Activated CD4-positive, alpha-beta T cell treated with anti-CD3 and anti-CD28 coated beads for 36 hours (primary cell): ENCODE measurements at regions of chr12 and their contacts with region 1.

Region 1: GRCh38 chr12:1594261-1595025 is at the start of gene FBXL14:
- DNase-seq: peak; percentile 93
- ATAC-seq: peak; percentile 57
- H3K4me3 Mint-ChIP-seq: peak within 1 kb of the TSS; percentile 98
- H3K27ac Mint-ChIP-seq: peak within 1 kb of the TSS; percentile 93
- H3K4me1 Mint-ChIP-seq: peaks cover 38% of the 10 kb centered on the region
- H3K27me3 Mint-ChIP-seq: no peaks in the 10 kb centered on the region
- total RNA-seq, gene FBXL14: 17.0 to 17.8 TPM

Region 2: GRCh38 chr12:459430-460258 is 1134.8 kb before region 1 on chr12 and contains the start of gene B4GALNT3:
- CTCF ChIA-PET with region 1: no interaction called
- POLR2A ChIA-PET with region 1: no interaction called
- intact Hi-C with region 1: loop called in 1 of 2 experiments (anchors 5 kb)
- DNase-seq: peak; percentile 63
- ATAC-seq: peak; percentile 60
- H3K4me3 Mint-ChIP-seq: peak within 1 kb of the TSS; percentile 74
- H3K27ac Mint-ChIP-seq: no peak within 1 kb of the TSS
- H3K4me1 Mint-ChIP-seq: peaks cover 15% of the 10 kb centered on the region
- H3K27me3 Mint-ChIP-seq: peaks cover 26% of the 10 kb centered on the region
- total RNA-seq, gene B4GALNT3: 2.2 to 3.3 TPM

Region 3: GRCh38 chr12:666766-667308 is 927.6 kb before region 1 on chr12:
- CTCF ChIA-PET with region 1: no interaction called
- POLR2A ChIA-PET with region 1: no interaction called
- intact Hi-C with region 1: loop called in 1 of 2 experiments (anchors 5 kb)
- DNase-seq: peak; percentile 53
- ATAC-seq: peak; percentile 45
- H3K4me3 Mint-ChIP-seq: peak overlapping the region; percentile 36
- H3K27ac Mint-ChIP-seq: peak overlapping the region; percentile 79
- H3K4me1 Mint-ChIP-seq: peaks cover 86% of the 10 kb centered on the region
- H3K27me3 Mint-ChIP-seq: no peaks in the 10 kb centered on the region

Region 4: DNA sequence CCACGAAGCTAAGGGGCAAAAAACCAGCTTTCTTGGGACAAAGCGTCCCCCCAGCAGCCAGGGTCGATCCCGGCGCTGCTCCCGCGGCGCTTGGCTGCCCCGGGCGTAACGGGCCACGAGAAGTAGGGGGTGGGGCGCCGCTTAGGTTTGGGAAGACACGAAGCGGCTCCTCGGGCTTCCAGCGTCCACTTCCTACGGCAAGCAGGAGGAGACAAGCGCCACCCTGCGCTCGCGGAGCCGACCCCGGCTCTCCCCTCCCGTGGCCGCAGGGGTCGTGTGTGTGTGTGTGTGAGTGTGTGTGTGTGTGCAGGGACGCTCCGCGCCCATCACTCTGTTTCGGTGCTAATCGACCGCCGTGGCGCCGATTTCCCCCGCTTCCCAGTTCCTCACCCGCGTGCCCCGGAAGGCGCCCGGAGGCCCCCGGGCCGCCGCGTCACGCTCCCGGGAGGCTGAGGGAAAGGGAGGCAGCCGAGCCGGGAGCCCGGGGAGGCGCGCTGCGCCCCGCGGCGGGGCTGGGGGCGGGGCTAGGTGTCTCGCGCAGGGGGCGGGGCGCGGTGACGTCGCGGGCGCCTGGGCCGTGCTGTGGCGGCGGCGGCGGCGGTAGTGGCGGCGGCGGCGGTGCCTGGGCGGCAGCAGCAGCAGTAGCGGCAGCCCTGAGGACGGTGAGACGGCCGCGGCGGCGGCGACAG is 603.6 kb before region 1 on chr12 and contains the start of gene ERC1:
- CTCF ChIA-PET with region 1: no interaction called
- POLR2A ChIA-PET with region 1: no interaction called
- intact Hi-C with region 1: loop called (anchors 1 to 5 kb)
- DNase-seq: peak; percentile 92
- ATAC-seq: peak; percentile 88
- H3K4me3 Mint-ChIP-seq: peak within 1 kb of the TSS; percentile 92
- H3K27ac Mint-ChIP-seq: peak within 1 kb of the TSS; percentile 95
- H3K4me1 Mint-ChIP-seq: peaks cover 44% of the 10 kb centered on the region
- H3K27me3 Mint-ChIP-seq: no peaks in the 10 kb centered on the region
- total RNA-seq, gene ERC1: 24.7 to 31.9 TPM

Region 5: GRCh38 chr12:1496162-1496900 is 98.1 kb before region 1 on chr12:
- CTCF ChIA-PET with region 1: no interaction called
- POLR2A ChIA-PET with region 1: no interaction called
- intact Hi-C with region 1: no loop called
- DNase-seq: no peak
- ATAC-seq: no peak
- H3K4me3 Mint-ChIP-seq: no peak overlapping the region
- H3K27ac Mint-ChIP-seq: no peak overlapping the region
- H3K4me1 Mint-ChIP-seq: no peaks in the 10 kb centered on the region
- H3K27me3 Mint-ChIP-seq: no peaks in the 10 kb centered on the region

Region 6: DNA sequence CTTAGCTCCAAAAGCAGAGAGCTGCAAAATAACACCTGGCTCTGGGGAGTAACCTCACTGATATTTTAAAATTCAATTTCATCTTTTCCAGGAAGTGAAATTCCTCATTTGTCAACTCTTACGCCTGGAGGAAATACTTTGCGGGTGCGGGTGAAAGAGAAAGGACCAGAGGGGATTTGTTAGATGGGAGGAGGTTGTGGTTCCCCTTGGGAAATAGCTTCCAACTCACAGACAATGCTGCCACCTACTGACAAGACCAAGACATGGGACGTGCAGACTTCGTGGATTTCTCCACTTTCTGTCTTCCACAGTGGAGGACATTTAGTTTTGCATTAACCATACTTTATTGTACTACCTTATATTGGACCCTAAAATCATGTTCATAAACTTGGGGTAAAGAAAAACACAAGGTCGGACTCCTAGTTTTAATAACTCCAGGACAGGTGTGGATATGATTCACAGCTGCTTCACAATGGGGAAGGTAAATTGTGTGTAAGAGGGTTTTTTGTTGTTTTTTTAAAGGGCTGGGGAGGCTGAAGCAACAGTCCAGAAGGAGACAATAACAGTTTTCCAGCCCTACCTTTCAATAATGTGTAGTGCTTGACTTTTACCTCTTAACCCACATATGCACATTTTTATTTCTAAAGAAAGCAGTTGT is 10.9 kb before region 1 on chr12:
- CTCF ChIA-PET with region 1: interaction called, 28 read pairs
- POLR2A ChIA-PET with region 1: no interaction called
- intact Hi-C with region 1: no loop called
- DNase-seq: peak; percentile 78
- ATAC-seq: peak; percentile 74
- H3K4me3 Mint-ChIP-seq: peak overlapping the region; percentile 20
- H3K27ac Mint-ChIP-seq: no peak overlapping the region
- H3K4me1 Mint-ChIP-seq: peaks cover 19% of the 10 kb centered on the region
- H3K27me3 Mint-ChIP-seq: no peaks in the 10 kb centered on the region

Region 7: DNA sequence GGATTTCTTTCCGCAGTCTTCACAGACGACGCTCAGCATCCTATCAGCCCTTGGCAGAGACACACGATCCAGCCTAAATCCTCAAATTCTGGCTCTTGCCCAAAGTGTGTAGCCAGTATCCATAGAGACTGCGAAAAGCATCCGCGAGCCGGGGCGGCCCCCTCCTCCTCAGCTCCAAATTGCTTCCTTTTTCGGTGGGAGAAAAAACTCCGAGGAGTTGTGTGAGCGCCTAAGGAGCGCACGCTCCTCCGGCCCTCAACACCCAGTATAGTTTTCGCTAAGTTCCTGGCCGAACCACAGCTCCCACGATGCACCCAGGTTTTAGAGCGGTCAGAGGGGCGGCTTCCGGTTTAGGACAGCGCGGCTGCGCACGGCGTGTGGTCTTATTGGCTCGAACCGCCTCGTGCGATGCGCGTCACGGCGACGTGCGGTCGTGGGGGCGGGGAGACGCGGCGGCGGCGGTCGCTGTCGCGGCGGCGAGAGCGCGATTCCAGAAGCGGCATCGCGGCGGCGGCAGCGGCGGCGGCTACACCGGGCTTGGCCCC is 96.2 kb after region 1 on chr12 and contains the start of gene ADIPOR2:
- CTCF ChIA-PET with region 1: interaction called, 3 read pairs
- POLR2A ChIA-PET with region 1: no interaction called
- intact Hi-C with region 1: loop called (anchors 2 to 5 kb)
- DNase-seq: peak; percentile 96
- ATAC-seq: peak; percentile 99
- H3K4me3 Mint-ChIP-seq: peak within 1 kb of the TSS; percentile 95
- H3K27ac Mint-ChIP-seq: peak within 1 kb of the TSS; percentile 97
- H3K4me1 Mint-ChIP-seq: peaks cover 47% of the 10 kb centered on the region
- H3K27me3 Mint-ChIP-seq: peaks cover 3% of the 10 kb centered on the region
- total RNA-seq, gene ADIPOR2: 51.7 to 52.6 TPM